ENCODE measurements at regions of chr22 and their contacts with region 1.

Region 1: DNA sequence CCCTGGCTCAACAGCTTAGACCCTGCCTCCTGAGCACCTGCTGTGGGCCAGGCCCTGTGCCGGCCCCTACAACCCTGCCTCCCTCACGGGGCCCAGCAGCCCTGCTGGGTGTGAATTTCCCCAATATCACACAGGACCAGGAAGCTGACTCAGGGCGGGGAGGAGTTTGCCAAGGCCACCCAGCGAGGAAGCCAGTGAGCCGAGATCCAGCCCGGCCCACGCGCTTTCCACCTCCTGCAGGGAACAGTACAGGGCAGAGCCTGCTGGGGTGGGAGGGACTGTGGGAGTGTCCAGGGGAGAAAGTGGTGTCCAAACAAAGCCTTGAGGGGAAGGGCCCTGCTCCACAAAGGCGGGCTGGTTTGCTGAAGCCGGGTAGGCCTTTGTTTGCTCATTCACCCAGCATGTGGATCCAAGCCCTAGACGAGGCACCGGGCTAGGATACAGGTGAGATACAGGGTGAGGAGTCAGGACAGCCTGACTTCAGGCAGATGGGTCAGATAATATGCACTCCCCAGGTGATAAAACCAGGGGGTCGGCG is 26.8 kb downstream of the RPL3 start:
- DNase-seq: peak; percentile 96
- H3K4me3 ChIP-seq: no peak overlapping the region
- H3K27ac ChIP-seq: peak overlapping the region; percentile 54
- H3K4me1 ChIP-seq: peaks cover 50% of the 10 kb centered on the region
- H3K27me3 ChIP-seq: no peaks in the 10 kb centered on the region
- CTCF ChIP-seq: no peak

Region 2: DNA sequence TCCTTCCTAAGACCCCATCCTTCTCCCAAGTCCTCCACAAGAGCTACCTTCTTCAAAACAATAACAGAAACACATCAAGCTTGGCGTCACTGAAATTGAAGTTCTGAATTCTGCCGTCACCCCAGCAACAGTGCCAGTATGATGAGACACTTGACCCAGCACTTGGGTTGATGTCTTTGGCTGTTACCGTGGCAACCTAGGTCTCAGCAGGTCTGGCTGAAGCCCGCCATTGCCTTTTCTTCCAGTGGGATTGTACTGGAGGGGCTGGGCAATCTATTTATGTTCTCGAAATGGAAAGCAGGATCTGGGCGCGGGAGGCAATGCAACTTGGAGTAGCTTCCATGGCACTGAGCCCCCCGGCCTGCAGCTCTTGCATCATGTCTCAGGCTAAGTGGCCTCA is 472.6 kb before region 1 on chr22:
- CTCF ChIA-PET with region 1: no interaction called
- dilution Hi-C with region 1: no loop called
- in situ Hi-C with region 1: no loop called
- intact Hi-C with region 1: no loop called
- DNase-seq: no peak
- H3K4me3 ChIP-seq: no peak overlapping the region
- H3K27ac ChIP-seq: no peak overlapping the region
- H3K4me1 ChIP-seq: no peaks in the 10 kb centered on the region
- H3K27me3 ChIP-seq: no peaks in the 10 kb centered on the region
- CTCF ChIP-seq: no peak

Region 3: GRCh38 chr22:39183991-39184585 is 108.5 kb before region 1 on chr22:
- CTCF ChIA-PET with region 1: no interaction called
- dilution Hi-C with region 1: loop called (anchors 5 kb)
- in situ Hi-C with region 1: no loop called
- intact Hi-C with region 1: no loop called
- DNase-seq: no peak
- H3K4me3 ChIP-seq: no peak overlapping the region
- H3K27ac ChIP-seq: no peak overlapping the region
- H3K4me1 ChIP-seq: peaks cover 9% of the 10 kb centered on the region
- H3K27me3 ChIP-seq: no peaks in the 10 kb centered on the region
- CTCF ChIP-seq: no peak

Region 4: GRCh38 chr22:39205338-39206021 is 87.2 kb before region 1 on chr22:
- CTCF ChIA-PET with region 1: no interaction called
- dilution Hi-C with region 1: loop called (anchors 5 kb)
- in situ Hi-C with region 1: no loop called
- intact Hi-C with region 1: loop called (anchors 2 kb)
- DNase-seq: peak; percentile 78
- H3K4me3 ChIP-seq: no peak overlapping the region
- H3K27ac ChIP-seq: peak overlapping the region; percentile 51
- H3K4me1 ChIP-seq: peaks cover 35% of the 10 kb centered on the region
- H3K27me3 ChIP-seq: no peaks in the 10 kb centered on the region
- CTCF ChIP-seq: no peak

Region 5: GRCh38 chr22:39253435-39254070 is 39.1 kb before region 1 on chr22:
- CTCF ChIA-PET with region 1: no interaction called
- dilution Hi-C with region 1: no loop called
- in situ Hi-C with region 1: no loop called
- intact Hi-C with region 1: loop called (anchors 1 kb)
- DNase-seq: peak; percentile 82
- H3K4me3 ChIP-seq: peak overlapping the region in 2 of 3 experiments; percentile 17 to 24
- H3K27ac ChIP-seq: no peak overlapping the region
- H3K4me1 ChIP-seq: peaks cover 37% of the 10 kb centered on the region
- H3K27me3 ChIP-seq: no peaks in the 10 kb centered on the region
- CTCF ChIP-seq: no peak

Region 6: DNA sequence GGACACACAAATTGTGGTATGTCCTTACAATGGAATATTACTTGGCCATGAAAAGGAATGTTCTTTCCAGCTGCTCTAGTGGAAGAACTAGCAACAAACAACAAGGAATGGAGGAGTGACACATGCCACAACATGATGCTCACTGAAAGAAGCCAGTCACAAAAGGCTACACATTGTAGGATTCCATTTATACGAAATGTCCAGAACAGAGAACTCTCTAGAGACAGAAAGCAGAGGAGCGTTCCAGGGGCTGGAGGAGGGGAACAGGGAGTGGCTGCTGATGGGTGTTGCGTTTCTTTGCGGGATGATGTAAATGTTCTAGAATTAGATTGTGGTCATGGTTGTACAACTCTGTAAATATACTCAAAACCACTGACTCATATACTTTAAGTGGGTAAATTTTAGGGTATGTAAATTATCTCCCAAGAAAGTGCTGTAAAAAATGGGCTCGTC is 15.4 kb before region 1 on chr22:
- CTCF ChIA-PET with region 1: no interaction called
- dilution Hi-C with region 1: no loop called
- in situ Hi-C with region 1: no loop called
- intact Hi-C with region 1: no loop called
- DNase-seq: peak; percentile 45
- H3K4me3 ChIP-seq: no peak overlapping the region
- H3K27ac ChIP-seq: no peak overlapping the region
- H3K4me1 ChIP-seq: no peaks in the 10 kb centered on the region
- H3K27me3 ChIP-seq: no peaks in the 10 kb centered on the region
- CTCF ChIP-seq: no peak

Region 7: GRCh38 chr22:39332441-39333064 is 39.9 kb after region 1 on chr22:
- CTCF ChIA-PET with region 1: no interaction called
- dilution Hi-C with region 1: no loop called
- in situ Hi-C with region 1: no loop called
- intact Hi-C with region 1: no loop called
- DNase-seq: no peak
- H3K4me3 ChIP-seq: no peak overlapping the region
- H3K27ac ChIP-seq: no peak overlapping the region
- H3K4me1 ChIP-seq: no peaks in the 10 kb centered on the region
- H3K27me3 ChIP-seq: no peaks in the 10 kb centered on the region
- CTCF ChIP-seq: no peak

Region 8: DNA sequence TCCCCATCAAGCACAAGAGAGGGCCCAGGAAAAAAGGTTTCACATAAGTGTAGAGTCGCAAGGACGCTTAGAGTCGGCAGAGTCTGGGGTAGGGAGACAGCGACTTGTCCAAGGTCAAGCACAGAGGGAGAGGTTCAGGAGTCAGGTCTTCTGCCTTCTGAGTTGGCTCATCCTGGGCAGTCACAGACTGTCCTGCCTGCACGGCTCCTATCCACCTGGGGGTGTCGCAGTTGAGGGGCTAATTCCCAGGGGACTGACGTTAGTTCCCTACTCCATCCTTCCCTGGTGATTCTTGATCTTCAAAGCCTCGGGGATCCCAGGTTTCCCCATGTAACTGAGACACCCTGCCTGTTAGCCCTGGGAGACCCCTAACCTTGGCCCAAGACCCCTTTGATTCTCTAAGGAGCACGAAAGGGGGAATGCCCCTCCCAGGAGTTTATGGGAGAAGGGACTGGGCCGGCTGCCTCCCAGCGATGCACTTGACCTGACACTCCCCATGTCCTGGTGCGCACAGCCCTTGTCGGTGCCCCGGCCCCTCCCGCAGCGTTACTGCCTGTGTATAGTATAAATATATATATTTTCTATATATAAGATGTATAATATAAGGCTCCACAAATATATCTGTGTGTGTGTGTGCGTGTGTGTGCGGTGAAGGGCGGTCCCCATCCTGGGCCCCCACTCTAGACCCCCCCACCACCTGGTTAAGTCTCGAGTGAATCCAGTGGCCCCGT is 92.3 kb after region 1 on chr22:
- CTCF ChIA-PET with region 1: no interaction called
- dilution Hi-C with region 1: loop called (anchors 5 kb)
- in situ Hi-C with region 1: no loop called
- intact Hi-C with region 1: no loop called
- DNase-seq: no peak
- H3K4me3 ChIP-seq: no peak overlapping the region
- H3K27ac ChIP-seq: no peak overlapping the region
- H3K4me1 ChIP-seq: peaks cover 5% of the 10 kb centered on the region
- H3K27me3 ChIP-seq: no peaks in the 10 kb centered on the region
- CTCF ChIP-seq: peak in 1 of 2 donors; percentile 2

Region 9: GRCh38 chr22:39405346-39406085 is 112.9 kb after region 1 on chr22:
- CTCF ChIA-PET with region 1: interaction called, 10 read pairs
- dilution Hi-C with region 1: no loop called
- in situ Hi-C with region 1: no loop called
- intact Hi-C with region 1: no loop called
- DNase-seq: no peak
- H3K4me3 ChIP-seq: no peak overlapping the region
- H3K27ac ChIP-seq: no peak overlapping the region
- H3K4me1 ChIP-seq: peaks cover 5% of the 10 kb centered on the region
- H3K27me3 ChIP-seq: no peaks in the 10 kb centered on the region
- CTCF ChIP-seq: no peak

Measured in mammary epithelial cell (primary cell).